ENCODE measurements at regions of chr15 and their contacts with region 1.

Region 1: DNA sequence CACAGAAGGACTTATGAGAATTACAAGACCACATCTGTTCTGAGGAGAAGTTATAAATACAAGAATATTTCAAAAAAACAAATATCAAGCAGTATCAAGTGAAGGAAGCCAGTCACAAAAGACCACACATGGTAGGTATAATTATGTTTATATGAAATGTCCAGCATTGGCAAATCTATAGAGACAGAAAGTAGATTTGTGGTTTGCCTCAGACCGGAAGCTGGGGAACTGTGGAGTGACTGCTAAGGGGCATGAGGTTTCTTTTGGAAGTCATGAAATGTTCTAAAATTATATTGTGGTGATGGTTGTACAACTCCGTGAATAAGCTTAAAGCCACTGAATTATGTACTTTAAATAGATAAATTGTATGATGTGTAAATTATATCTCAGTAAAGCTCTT is 136.9 kb downstream of the FRMD5 start:
- DNase-seq: no peak
- H3K4me3 ChIP-seq: no peak overlapping the region
- H3K27ac ChIP-seq: no peak overlapping the region
- H3K4me1 ChIP-seq: peaks cover 11% of the 10 kb centered on the region
- H3K27me3 ChIP-seq: no peaks in the 10 kb centered on the region
- CTCF ChIP-seq: no peak

Region 2: DNA sequence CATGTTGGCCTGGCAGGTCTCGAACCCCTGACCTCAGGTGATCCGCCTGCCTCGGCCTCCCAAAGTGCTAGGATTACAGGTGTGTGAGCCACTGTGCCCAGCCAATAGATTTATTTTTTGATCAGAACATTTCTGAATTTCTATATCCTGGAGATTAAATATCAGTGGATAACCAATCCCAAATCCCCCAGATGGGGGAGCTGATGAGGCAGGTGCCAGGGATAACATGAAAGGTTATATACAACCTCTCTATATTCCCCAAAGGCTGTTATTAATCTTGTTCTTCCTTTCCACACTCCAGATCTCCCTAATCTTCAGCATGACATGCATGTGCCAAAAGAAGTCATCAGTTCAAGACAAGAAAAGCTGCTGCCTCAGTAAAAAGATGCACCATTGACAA is 119.1 kb before region 1 on chr15:
- intact Hi-C with region 1: no loop called
- DNase-seq: no peak
- H3K4me3 ChIP-seq: no peak overlapping the region
- H3K27ac ChIP-seq: no peak overlapping the region
- H3K4me1 ChIP-seq: no peaks in the 10 kb centered on the region
- H3K27me3 ChIP-seq: no peaks in the 10 kb centered on the region
- CTCF ChIP-seq: peak; percentile 30

Region 3: DNA sequence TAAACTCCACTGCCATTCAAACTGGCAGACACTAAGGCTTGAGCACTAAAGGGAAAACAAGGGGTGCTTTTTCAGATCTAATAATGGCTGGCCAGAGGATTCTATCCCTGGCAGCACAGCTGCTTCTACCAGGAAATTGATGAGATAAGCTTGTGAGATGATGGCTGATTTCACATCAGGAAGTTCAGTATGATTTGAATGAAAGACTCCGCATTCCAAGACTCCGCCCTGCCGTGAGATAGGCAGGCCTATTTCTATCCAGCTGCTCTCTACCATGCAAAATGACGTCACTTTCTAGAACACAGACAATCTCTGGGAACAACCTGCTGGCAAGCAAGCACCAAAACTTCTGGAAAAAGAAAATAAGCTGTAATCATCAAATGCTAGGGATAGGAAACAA is 59.5 kb before region 1 on chr15:
- intact Hi-C with region 1: loop called (anchors 10 kb)
- DNase-seq: peak; percentile 42
- H3K4me3 ChIP-seq: peak overlapping the region; percentile 23
- H3K27ac ChIP-seq: peak overlapping the region; percentile 56
- H3K4me1 ChIP-seq: peaks cover 27% of the 10 kb centered on the region
- H3K27me3 ChIP-seq: no peaks in the 10 kb centered on the region
- CTCF ChIP-seq: no peak

Measured in left ventricle myocardium inferior (tissue), 1 donor.